ENCODE measurements at regions of chr7 and their contacts with region 1.

Region 1: GRCh38 chr7:105876091-105876963 is at the start of gene ATXN7L1:
- DNase-seq: peak; percentile 94 to 97
- ATAC-seq: peak; percentile 94 to 99 (median 98)
- H3K4me3 ChIP-seq: peak within 1 kb of the TSS; percentile 84
- H3K27ac ChIP-seq: peak within 1 kb of the TSS; percentile 84
- H3K4me1 ChIP-seq: no peaks in the 10 kb centered on the region
- H3K27me3 ChIP-seq: no peaks in the 10 kb centered on the region
- CTCF ChIP-seq: peak; percentile 82
- total RNA-seq, gene ATXN7L1: 3.0 to 6.0 (median 4.0) TPM

Region 2: DNA sequence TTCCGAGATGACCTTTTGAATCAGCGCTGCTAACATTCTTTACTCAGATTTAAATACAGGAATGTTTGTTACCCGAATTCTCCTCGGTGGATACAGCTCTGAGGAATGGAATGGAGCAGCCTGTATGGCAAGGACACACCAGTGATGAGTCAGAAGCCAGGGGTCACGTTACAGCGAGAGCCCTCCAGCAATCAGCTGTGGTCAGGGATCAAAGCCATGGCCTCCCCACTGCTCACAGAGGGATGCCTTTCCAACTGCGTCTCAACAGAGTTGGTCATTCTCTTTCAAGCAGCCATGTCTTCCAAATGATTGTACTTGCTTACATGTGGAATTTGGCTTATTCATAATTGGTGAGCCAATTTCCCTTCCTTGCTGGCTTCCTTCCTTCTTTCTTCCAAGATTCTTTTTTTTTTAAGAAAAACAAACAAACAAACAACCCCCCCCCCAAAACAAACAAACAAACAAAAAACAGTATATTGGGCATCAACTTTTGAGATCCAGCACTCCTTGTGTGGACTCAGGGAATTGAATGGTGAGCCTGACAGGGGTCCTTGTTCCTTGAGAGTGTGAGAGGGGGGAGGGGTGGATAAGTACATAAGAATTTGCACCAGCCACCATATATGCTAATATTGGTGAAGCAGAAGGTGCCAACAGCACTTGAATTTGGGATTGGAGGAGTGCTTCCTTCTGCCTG is 100.1 kb before region 1 on chr7:
- intact Hi-C with region 1: loop called in 1 of 2 experiments (anchors 5 kb)
- DNase-seq: peak; percentile 80 to 84
- ATAC-seq: peak; percentile 94 to 99 (median 98)
- H3K4me3 ChIP-seq: no peak overlapping the region
- H3K27ac ChIP-seq: peak overlapping the region; percentile 76
- H3K4me1 ChIP-seq: peaks cover 22% of the 10 kb centered on the region
- H3K27me3 ChIP-seq: no peaks in the 10 kb centered on the region
- CTCF ChIP-seq: no peak

Region 3: GRCh38 chr7:106009403-106010226 is 133.3 kb after region 1 on chr7:
- intact Hi-C with region 1: loop called (anchors 5 kb)
- DNase-seq: peak; percentile 82 to 90
- ATAC-seq: peak; percentile 97 to 99 (median 98)
- H3K4me3 ChIP-seq: no peak overlapping the region
- H3K27ac ChIP-seq: no peak overlapping the region
- H3K4me1 ChIP-seq: peaks cover 6% of the 10 kb centered on the region
- H3K27me3 ChIP-seq: no peaks in the 10 kb centered on the region
- CTCF ChIP-seq: peak; percentile 97

Region 4: DNA sequence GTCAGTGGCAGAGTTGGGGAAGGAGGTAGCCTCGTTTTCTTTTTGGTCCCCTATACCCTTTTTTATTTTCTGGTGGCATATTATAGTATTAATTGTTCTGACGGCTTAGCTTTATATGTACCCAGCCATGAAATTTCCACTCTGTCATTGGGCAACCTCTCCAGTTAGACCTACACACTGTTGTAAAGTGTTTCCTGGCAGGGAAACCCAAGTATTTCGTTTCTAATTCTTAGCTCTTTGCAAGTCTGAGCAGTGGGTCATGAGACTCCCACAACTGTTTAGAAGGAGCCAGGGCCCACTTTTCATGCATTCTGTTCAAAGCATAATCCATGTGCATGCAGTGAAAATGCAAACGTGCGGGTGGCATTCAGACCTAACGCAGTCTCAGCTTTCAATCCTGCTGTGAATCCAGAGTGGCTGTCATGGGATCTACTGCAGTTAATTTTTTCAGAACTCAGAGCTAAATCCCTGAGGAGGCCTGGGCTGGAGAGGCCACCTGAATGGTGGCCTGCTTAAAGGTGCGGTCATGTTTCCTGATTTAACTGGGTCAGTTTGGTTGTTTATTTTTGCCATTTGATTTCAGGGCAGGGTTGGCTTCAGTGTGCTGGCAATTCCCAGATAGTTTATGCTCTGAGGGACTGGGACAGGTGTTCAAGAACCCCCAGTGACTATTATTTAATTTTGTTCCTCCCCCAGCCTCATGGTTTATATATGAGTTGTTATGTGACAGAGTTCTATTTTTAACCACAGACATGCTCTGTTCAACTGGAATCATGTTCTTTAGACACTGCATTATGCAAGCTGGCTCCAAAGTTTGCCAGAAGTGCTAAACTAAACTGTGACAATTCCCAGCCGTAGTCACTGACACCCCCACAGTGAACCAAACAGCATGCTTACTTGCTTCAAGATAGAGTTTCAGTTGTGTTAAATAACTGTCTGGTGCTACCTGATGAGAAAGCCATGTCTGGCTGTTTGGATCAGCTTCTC is 263.2 kb after region 1 on chr7:
- intact Hi-C with region 1: loop called in 1 of 2 experiments (anchors 10 kb)
- DNase-seq: peak; percentile 37 to 68
- ATAC-seq: peak; percentile 93 to 97 (median 96)
- H3K4me3 ChIP-seq: peak overlapping the region; percentile 52
- H3K27ac ChIP-seq: peak overlapping the region; percentile 96
- H3K4me1 ChIP-seq: peaks cover 21% of the 10 kb centered on the region
- H3K27me3 ChIP-seq: no peaks in the 10 kb centered on the region
- CTCF ChIP-seq: no peak